Body of pancreas (tissue), 4 donors: ENCODE measurements at regions of chr12 and their contacts with region 1.

Region 1: DNA sequence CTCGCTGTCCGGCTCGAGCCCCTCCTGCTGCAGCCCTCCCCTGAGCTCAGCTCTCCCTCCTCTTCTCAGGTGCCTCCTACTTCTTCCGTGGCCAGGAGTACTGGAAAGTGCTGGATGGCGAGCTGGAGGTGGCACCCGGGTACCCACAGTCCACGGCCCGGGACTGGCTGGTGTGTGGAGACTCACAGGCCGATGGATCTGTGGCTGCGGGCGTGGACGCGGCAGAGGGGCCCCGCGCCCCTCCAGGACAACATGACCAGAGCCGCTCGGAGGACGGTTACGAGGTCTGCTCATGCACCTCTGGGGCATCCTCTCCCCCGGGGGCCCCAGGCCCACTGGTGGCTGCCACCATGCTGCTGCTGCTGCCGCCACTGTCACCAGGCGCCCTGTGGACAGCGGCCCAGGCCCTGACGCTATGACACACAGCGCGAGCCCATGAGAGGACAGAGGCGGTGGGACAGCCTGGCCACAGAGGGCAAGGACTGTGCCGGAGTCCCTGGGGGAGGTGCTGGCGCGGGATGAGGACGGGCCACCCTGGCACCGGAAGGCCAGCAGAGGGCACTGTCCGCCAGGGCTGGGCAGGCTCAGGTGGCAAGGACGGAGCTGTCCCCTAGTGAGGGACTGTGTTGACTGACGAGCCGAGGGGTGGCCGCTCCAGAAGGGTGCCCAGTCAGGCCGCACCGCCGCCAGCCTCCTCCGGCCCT is 22.8 kb downstream of the MMP17 start:
- DNase-seq: peak; percentile 59 to 81 (median 72)
- ATAC-seq: peak; percentile 84
- H3K4me3 ChIP-seq: no peak overlapping the region
- H3K27ac ChIP-seq: no peak overlapping the region
- H3K4me1 ChIP-seq: peaks cover 7% of the 10 kb centered on the region
- H3K27me3 ChIP-seq: no peaks in the 10 kb centered on the region
- CTCF ChIP-seq: peak; percentile 58 to 97 (median 79)
- POLR2A ChIP-seq: no peak

Region 2: GRCh38 chr12:131402781-131403396 is 448.1 kb before region 1 on chr12:
- intact Hi-C with region 1: no loop called
- DNase-seq: no peak
- ATAC-seq: no peak
- H3K4me3 ChIP-seq: no peak overlapping the region
- H3K27ac ChIP-seq: no peak overlapping the region
- H3K4me1 ChIP-seq: no peaks in the 10 kb centered on the region
- H3K27me3 ChIP-seq: no peaks in the 10 kb centered on the region
- CTCF ChIP-seq: no peak
- POLR2A ChIP-seq: no peak

Region 3: GRCh38 chr12:131902332-131903241 is 51.6 kb after region 1 on chr12:
- intact Hi-C with region 1: no loop called
- DNase-seq: peak in 1 of 4 donors; percentile 5
- ATAC-seq: no peak
- H3K4me3 ChIP-seq: no peak overlapping the region
- H3K27ac ChIP-seq: no peak overlapping the region
- H3K4me1 ChIP-seq: peaks cover 64% of the 10 kb centered on the region
- H3K27me3 ChIP-seq: no peaks in the 10 kb centered on the region
- CTCF ChIP-seq: no peak
- POLR2A ChIP-seq: no peak

Region 4: DNA sequence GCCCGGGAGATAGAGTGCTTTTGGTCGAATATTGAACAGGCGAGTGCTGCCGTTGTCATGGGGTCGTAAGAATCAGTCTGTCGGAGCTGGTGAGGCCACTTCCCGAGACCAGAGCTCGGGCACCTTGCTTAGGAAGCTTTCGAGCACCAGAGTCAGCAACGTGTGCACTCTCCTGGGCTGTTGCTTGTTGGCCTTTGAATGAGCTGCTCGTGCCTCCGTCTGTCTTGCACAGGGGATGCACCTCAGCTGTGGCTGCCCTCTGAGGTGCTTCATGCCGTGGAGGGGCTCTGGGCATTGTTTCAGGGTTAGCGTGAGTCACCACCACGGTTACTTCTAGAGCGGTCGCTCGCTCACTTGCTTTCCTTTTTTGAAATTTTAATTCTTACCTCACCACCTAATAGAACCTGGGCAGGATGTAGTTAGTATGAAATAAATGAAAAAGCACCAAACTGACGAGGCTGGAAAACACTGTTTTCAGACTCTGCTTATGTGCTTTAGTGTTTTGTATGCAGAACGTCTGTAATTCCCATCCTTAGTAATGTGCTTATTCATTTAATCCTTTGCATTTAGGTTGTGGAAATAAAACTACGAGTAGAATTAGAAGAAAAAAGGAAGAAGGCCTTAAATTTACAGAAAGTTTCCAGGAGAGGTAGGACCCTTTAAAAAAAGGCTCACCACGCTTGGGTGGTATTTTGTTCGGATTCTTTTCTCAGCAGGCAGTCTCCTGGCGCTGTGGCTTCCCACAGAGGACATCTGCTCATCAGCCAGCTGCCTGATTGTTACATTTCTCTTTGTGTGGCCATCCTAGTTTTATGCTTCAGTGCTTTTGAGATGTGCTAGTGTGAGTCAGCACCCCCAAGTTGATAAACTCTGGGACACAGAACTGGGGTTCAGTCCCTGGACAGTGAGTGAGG is 139.3 kb after region 1 on chr12:
- intact Hi-C with region 1: loop called (anchors 10 kb)
- DNase-seq: no peak
- ATAC-seq: no peak
- H3K4me3 ChIP-seq: no peak overlapping the region
- H3K27ac ChIP-seq: no peak overlapping the region
- H3K4me1 ChIP-seq: no peaks in the 10 kb centered on the region
- H3K27me3 ChIP-seq: no peaks in the 10 kb centered on the region
- CTCF ChIP-seq: no peak
- POLR2A ChIP-seq: no peak